Adrenal gland (tissue), 19 donors: ENCODE measurements at regions of chr20 and their contacts with region 1.

Region 1: GRCh38 chr20:3679749-3680700 is 1.8 kb downstream of the ADAM33 start:
- DNase-seq: no peak
- H3K4me3 ChIP-seq: no peak overlapping the region
- H3K27ac ChIP-seq: peak overlapping the region in 2 of 5 donors; percentile 1 to 71
- H3K4me1 ChIP-seq: peaks cover 0 to 7% of the 10 kb centered on the region in 2 donors
- H3K27me3 ChIP-seq: peaks cover 24% of the 10 kb centered on the region
- CTCF ChIP-seq: no peak
- POLR2A ChIP-seq: no peak

Region 2: GRCh38 chr20:3710703-3711483 is 30.9 kb after region 1 on chr20:
- intact Hi-C with region 1: loop called (anchors 2 to 5 kb)
- DNase-seq: peak; percentile 59 to 83 (median 72)
- H3K4me3 ChIP-seq: no peak overlapping the region
- H3K27ac ChIP-seq: peak overlapping the region in 2 of 5 donors; percentile 9 to 17
- H3K4me1 ChIP-seq: no peaks in the 10 kb centered on the region
- H3K27me3 ChIP-seq: no peaks in the 10 kb centered on the region
- CTCF ChIP-seq: peak; percentile 85 to 99 (median 90)
- POLR2A ChIP-seq: no peak

Region 3: GRCh38 chr20:3854462-3854871 is 174.4 kb after region 1 on chr20:
- intact Hi-C with region 1: loop called in 1 of 2 experiments (anchors 10 kb)
- DNase-seq: no peak
- H3K4me3 ChIP-seq: no peak overlapping the region
- H3K27ac ChIP-seq: no peak overlapping the region
- H3K4me1 ChIP-seq: no peaks in the 10 kb centered on the region
- H3K27me3 ChIP-seq: no peaks in the 10 kb centered on the region
- CTCF ChIP-seq: no peak
- POLR2A ChIP-seq: no peak

Region 4: DNA sequence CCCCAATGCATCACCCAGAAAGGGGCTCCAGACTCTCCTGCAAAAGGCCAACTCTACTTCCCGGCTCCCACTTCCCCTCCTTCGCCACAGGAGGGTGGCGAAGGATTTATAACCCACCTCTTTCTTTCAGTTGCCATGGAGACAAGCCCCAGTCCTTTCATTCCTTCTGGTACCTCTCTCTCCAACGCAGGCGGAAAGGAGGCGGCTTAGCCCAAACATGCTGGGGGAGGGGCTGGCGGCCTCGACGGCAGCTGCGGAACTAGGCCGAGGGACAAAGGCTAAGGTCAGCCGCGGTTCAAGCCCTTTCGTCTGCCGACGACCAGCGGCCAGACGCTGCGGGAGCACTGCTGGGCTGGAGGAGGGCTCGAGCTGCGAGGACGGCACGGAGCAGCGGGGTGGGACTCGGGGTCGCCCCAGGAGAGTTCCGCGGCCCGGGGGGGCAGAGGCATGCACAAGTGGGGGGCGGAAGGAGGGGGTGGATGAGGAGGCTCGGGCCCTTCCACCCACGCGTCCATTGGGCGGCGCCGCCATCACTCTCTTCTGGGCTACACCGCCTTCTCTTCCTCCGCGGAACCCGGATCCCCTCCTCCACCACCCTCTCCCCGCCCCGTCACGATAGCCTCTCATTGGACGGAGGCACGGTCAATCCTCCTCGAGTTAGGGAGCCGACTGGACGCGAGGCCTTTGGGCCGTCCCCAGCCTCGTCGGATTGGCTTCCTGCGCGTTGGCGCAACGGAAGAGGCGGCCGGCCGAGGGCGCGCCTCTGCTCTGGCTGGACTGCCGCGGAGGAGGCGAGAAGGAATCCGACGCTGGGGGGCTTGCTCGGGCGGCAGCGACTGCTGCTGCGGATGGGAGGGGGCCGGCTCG is 208.8 kb after region 1 on chr20 and contains the start of gene PANK2:
- intact Hi-C with region 1: no loop called
- DNase-seq: peak; percentile 99 to 100 (median 100)
- H3K4me3 ChIP-seq: peak within 1 kb of the TSS; percentile 69 to 100 (median 92)
- H3K27ac ChIP-seq: peak within 1 kb of the TSS; percentile 75 to 97 (median 90)
- H3K4me1 ChIP-seq: peaks cover 27 to 46% of the 10 kb centered on the region in 2 donors
- H3K27me3 ChIP-seq: no peaks in the 10 kb centered on the region
- CTCF ChIP-seq: peak in 5 of 6 experiments; percentile 46 to 74 (median 66)
- POLR2A ChIP-seq: peak; percentile 87 to 91
- total RNA-seq, gene PANK2: 32.5 to 70.1 (median 47.4) TPM